Natural killer cell (primary cell): ENCODE measurements at regions of chr16 and their contacts with region 1.

Region 1: GRCh38 chr16:31073968-31074813 is at the starts of genes ZNF646 and ZNF668:
- DNase-seq: peak; percentile 93 to 100
- ATAC-seq: peak; percentile 85 to 93 (median 85)
- H3K4me3 ChIP-seq: peak within 1 kb of the TSS; percentile 92
- H3K4me3 Mint-ChIP-seq: peak within 1 kb of the TSS; percentile 97
- H3K27ac ChIP-seq: peak within 1 kb of the TSS; percentile 89
- H3K27ac Mint-ChIP-seq: peak within 1 kb of the TSS; percentile 95 to 97
- H3K4me1 ChIP-seq: peaks cover 29% of the 10 kb centered on the region
- H3K4me1 Mint-ChIP-seq: peaks cover 45 to 51% of the 10 kb centered on the region in 2 donors
- H3K27me3 ChIP-seq: no peaks in the 10 kb centered on the region
- H3K27me3 Mint-ChIP-seq: no peaks in the 10 kb centered on the region
- CTCF ChIP-seq: no peak
- total RNA-seq, gene ZNF646: 22.0 to 31.1 (median 30.1) TPM
- total RNA-seq, gene ZNF668: 11.0 to 27.4 (median 22.6) TPM

Region 2: DNA sequence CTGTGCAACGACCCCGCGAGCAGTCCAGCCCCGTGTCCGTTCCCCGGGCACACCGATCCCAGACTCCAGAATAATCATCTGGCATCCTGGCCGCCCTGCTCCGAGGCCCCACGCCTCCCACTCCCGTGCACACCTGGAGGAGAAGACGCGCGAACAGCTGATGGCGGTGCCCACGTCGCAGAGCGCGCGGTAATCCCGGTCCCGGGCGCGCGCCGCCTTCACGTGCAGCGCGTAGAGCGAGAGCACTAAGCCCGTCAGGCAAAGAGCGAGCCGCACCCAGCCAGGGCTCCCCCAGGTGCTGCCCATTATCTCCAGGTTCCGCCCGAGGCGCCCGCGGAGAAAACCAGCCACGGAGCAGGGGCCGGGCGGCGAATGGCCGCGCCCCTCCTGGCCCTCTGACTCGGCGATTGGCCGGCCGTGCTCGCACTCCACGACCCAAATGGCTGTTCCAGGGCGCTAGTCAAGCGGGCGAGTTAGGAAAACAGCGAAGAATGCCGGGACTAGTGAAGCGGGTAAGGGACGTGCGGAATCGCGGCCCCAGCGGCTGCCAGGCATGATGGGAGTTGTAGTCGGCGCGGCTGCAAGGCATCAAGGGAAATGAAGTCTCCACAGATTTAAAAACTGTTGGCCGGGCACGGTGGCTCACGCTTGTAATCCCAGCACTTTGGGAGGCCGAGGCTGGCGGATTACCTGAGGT is 20.4 kb after region 1 on chr16 and contains the start of gene VKORC1:
- intact Hi-C with region 1: loop called (anchors 1 kb)
- DNase-seq: peak; percentile 69 to 93
- ATAC-seq: peak; percentile 78 to 89 (median 82)
- H3K4me3 ChIP-seq: peak within 1 kb of the TSS; percentile 87
- H3K4me3 Mint-ChIP-seq: peak within 1 kb of the TSS; percentile 87
- H3K27ac ChIP-seq: peak within 1 kb of the TSS; percentile 67
- H3K27ac Mint-ChIP-seq: peak within 1 kb of the TSS; percentile 84 to 90
- H3K4me1 ChIP-seq: peaks cover 26% of the 10 kb centered on the region
- H3K4me1 Mint-ChIP-seq: peaks cover 22 to 24% of the 10 kb centered on the region in 2 donors
- H3K27me3 ChIP-seq: no peaks in the 10 kb centered on the region
- H3K27me3 Mint-ChIP-seq: no peaks in the 10 kb centered on the region
- CTCF ChIP-seq: no peak
- total RNA-seq, gene VKORC1: 35.9 to 42.1 (median 41.8) TPM

Region 3: DNA sequence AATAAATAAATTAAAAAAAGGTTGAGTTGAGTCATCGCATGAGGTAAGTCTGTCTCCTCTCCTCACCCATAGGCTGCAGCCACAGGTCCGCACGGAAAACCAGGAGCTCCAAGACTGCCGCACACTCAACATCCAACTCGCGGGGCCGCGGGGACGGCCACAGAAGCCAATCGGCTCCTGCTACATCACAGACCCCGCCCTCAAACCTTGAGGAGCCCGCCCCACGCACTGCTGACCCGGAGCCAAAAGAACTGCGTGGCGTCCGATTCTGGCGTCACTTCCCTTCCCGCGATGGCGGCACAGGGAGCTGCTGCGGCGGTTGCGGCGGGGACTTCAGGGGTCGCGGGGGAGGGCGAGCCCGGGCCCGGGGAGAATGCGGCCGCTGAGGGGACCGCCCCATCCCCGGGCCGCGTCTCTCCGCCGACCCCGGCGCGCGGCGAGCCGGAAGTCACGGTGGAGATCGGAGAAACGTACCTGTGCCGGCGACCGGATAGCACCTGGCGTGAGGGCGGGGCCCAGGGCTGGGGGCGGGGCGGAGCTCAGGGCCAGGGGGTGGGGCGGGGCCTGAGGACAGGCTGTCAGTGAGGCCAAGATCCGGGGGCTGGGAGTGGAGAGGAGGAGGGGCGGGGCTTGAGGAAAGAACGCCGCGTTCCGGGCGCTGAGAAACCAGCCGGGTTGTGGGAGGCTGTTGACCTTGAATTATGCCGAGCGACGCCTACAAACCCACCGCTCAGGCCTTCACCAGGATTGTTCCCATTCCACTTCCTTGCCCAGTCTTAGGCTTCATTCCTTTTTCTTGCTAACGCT is 43.4 kb after region 1 on chr16 and contains the start of gene KAT8:
- intact Hi-C with region 1: loop called (anchors 1 kb)
- DNase-seq: peak; percentile 93 to 98
- ATAC-seq: peak; percentile 92 to 97 (median 92)
- H3K4me3 ChIP-seq: peak within 1 kb of the TSS; percentile 39
- H3K4me3 Mint-ChIP-seq: peak within 1 kb of the TSS; percentile 85
- H3K27ac ChIP-seq: peak within 1 kb of the TSS; percentile 74
- H3K27ac Mint-ChIP-seq: peak within 1 kb of the TSS; percentile 81 to 91
- H3K4me1 ChIP-seq: peaks cover 27% of the 10 kb centered on the region
- H3K4me1 Mint-ChIP-seq: peaks cover 12 to 17% of the 10 kb centered on the region in 2 donors
- H3K27me3 ChIP-seq: no peaks in the 10 kb centered on the region
- H3K27me3 Mint-ChIP-seq: no peaks in the 10 kb centered on the region
- CTCF ChIP-seq: no peak
- total RNA-seq, gene KAT8: 90.6 to 101 (median 93.4) TPM